ENCODE measurements at regions of chr2 and their contacts with region 1.

Region 1: DNA sequence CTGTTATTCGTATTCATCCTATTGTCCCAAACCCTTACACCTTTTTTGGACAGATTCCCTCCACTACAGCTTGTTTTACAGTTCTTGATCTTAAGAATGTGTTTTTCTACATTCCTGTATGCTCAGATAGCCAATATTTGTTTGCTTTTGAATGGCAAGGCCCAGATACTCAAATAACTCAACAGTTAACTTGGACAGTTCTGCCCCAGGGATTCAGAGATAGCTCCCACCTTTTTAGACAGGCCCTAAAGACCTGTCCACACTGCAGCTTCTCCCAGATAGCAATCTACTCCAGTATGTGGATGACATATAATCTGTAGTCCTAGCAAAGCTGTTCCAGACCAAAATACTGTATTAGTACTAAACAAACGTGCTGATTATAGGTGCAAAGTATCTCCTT is 7.1 kb upstream of the AGXT start:
- DNase-seq: no peak
- CTCF ChIP-seq: no peak

Region 2: GRCh38 chr2:240840435-240841080 is 21.0 kb before region 1 on chr2:
- CTCF ChIA-PET with region 1: interaction called, 10 read pairs
- POLR2A ChIA-PET with region 1: no interaction called
- DNase-seq: peak; percentile 62
- CTCF ChIP-seq: peak; percentile 54

Region 3: GRCh38 chr2:240851078-240851991 is 10.2 kb before region 1 on chr2:
- CTCF ChIA-PET with region 1: interaction called, 23 read pairs
- POLR2A ChIA-PET with region 1: no interaction called
- DNase-seq: peak; percentile 89
- CTCF ChIP-seq: peak; percentile 96

Region 4: GRCh38 chr2:240873805-240874714 is 12.5 kb after region 1 on chr2:
- CTCF ChIA-PET with region 1: no interaction called
- POLR2A ChIA-PET with region 1: no interaction called
- DNase-seq: no peak
- CTCF ChIP-seq: no peak

Measured in GM10248 (cell line).